Caco-2 (cell line): ENCODE measurements at regions of chr1 and their contacts with region 1.

Region 1: DNA sequence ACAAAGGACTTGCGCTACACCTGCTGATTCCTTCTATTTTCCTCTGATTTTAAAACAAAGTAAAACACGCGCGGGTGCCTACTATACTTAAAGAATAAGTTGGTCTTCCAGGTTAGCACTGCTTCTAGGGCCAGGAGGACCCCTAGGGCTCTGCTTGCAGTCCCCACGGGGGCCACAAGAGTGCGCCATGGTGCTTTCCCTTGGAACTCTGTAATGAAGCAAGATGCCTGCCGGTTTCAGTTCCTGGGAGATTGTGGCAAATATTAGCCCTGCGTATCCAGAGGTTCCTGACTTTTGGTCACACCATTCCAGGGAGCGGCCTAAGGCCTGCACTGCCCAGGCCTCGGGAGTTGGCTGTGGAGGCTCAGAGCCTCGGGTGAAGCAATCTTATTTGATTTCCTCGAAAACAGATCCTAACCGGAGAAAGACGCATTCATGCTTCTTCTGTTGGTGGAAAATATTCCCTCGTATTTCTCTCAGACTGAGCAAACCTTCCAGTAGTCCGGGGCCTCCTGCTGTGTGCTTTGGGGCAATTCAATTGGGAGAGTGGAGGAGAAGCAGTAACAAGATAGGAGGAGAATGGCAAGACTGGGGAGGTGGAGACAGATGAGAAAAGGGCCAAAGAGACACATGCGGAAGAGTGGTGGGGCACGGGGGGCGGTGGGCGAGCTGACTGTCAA is 25.3 kb downstream of the ADAM30 start:
- DNase-seq: peak; percentile 76 to 87
- H3K4me3 ChIP-seq: no peak overlapping the region
- H3K4me3 Mint-ChIP-seq: no peak overlapping the region
- H3K27ac Mint-ChIP-seq: peak overlapping the region; percentile 17
- H3K4me1 ChIP-seq: no peaks in the 10 kb centered on the region
- H3K4me1 Mint-ChIP-seq: no peaks in the 10 kb centered on the region
- H3K27me3 ChIP-seq: no peaks in the 10 kb centered on the region
- H3K27me3 Mint-ChIP-seq: no peaks in the 10 kb centered on the region
- CTCF ChIP-seq: peak; percentile 82 to 87

Region 2: GRCh38 chr1:119795261-119796200 is 75.5 kb before region 1 on chr1:
- CTCF ChIA-PET with region 1: no interaction called
- POLR2A ChIA-PET with region 1: no interaction called
- intact Hi-C with region 1: no loop called
- DNase-seq: no peak
- H3K4me3 ChIP-seq: no peak overlapping the region
- H3K4me3 Mint-ChIP-seq: no peak overlapping the region
- H3K27ac Mint-ChIP-seq: no peak overlapping the region
- H3K4me1 ChIP-seq: peaks cover 26% of the 10 kb centered on the region
- H3K4me1 Mint-ChIP-seq: peaks cover 17% of the 10 kb centered on the region
- H3K27me3 ChIP-seq: no peaks in the 10 kb centered on the region
- H3K27me3 Mint-ChIP-seq: no peaks in the 10 kb centered on the region
- CTCF ChIP-seq: no peak

Region 3: GRCh38 chr1:119948342-119949214 is 77.5 kb after region 1 on chr1:
- CTCF ChIA-PET with region 1: no interaction called
- POLR2A ChIA-PET with region 1: no interaction called
- intact Hi-C with region 1: loop called (anchors 10 kb)
- DNase-seq: peak; percentile 72 to 79
- H3K4me3 ChIP-seq: no peak overlapping the region
- H3K4me3 Mint-ChIP-seq: no peak overlapping the region
- H3K27ac Mint-ChIP-seq: no peak overlapping the region
- H3K4me1 ChIP-seq: peaks cover 3% of the 10 kb centered on the region; the same call in 1 of the 2 replicates
- H3K4me1 Mint-ChIP-seq: no peaks in the 10 kb centered on the region
- H3K27me3 ChIP-seq: no peaks in the 10 kb centered on the region
- H3K27me3 Mint-ChIP-seq: no peaks in the 10 kb centered on the region
- CTCF ChIP-seq: peak; percentile 73 to 92

Region 4: DNA sequence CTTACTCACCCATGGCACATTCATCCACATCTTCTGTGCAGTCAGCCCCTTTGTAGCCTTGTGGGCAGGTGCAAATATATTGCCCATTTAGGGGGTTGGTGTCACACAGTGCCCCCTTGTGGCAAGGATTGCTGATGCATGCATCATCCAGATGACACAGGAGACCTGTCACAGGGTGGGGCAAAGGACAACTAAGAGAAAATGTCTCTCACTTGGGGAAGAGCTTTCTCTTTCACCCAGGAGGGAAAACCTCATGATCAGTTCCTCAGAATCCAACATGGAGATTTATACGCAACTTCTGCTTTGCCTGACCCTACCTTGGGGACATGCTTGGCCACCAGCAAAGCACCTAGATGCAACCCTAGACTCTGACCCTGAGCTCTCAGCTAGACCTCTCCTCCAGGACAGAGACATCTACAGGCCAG is 97.0 kb after region 1 on chr1:
- CTCF ChIA-PET with region 1: no interaction called
- POLR2A ChIA-PET with region 1: no interaction called
- intact Hi-C with region 1: no loop called
- DNase-seq: peak; percentile 71 to 74
- H3K4me3 ChIP-seq: no peak overlapping the region
- H3K4me3 Mint-ChIP-seq: no peak overlapping the region
- H3K27ac Mint-ChIP-seq: peak overlapping the region; percentile 46
- H3K4me1 ChIP-seq: no peaks in the 10 kb centered on the region
- H3K4me1 Mint-ChIP-seq: peaks cover 9% of the 10 kb centered on the region
- H3K27me3 ChIP-seq: no peaks in the 10 kb centered on the region
- H3K27me3 Mint-ChIP-seq: no peaks in the 10 kb centered on the region
- CTCF ChIP-seq: peak; percentile 65 to 66